ENCODE measurements at regions of chr2 and their contacts with region 1.

Region 1: DNA sequence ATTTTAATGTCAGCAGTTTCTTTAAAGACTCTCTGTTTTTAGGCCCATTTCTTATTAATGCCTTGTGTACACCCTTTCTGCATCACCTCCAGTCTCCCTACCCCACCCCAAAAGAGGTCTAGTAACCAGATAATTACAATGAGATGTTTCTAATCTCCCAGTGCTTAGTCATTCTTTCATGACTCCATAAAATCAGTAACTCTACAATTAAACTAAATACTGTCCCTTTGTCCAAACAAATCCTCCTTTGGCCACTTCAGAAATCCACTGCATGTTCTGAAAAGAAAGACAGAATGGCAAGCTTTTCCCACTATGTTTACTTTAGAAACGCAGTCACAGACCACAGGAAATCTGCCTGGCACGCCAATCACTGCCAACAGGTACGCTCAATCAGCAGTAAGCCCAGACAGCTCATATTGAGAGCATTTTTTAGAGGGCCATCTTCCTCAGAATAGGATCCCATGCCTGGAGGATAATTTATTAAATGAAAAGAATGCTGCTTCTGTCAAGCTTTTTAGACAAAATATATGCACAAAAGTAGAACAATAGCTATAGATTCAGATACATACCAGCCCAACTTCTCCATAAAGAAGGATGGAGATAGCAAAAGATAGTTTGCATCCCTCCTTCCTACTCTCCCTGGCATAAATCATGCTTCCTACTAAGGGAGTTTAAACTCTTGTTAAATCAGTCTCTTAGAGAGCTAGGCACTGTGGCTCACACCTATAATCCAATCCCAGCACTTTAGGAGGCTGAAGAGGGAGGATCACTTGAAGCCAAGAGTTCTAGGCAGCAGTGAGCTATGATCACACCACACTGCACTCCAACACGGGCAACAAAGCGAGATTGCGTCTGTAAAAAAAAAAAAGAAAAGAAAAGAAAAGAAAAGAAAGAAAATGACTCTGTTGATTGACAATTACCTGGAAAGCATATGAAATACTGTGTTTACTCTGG is 14.6 kb downstream of the CLASP1 start:
- DNase-seq: peak; percentile 43 to 71
- H3K4me3 ChIP-seq: no peak overlapping the region
- H3K27ac ChIP-seq: peak overlapping the region; percentile 66
- H3K4me1 ChIP-seq: peaks cover 19% of the 10 kb centered on the region
- H3K27me3 ChIP-seq: no peaks in the 10 kb centered on the region
- CTCF ChIP-seq: no peak

Region 2: GRCh38 chr2:121561617-121562268 is 72.9 kb before region 1 on chr2:
- CTCF ChIA-PET with region 1: no interaction called
- POLR2A ChIA-PET with region 1: interaction called, 19 read pairs
- intact Hi-C with region 1: no loop called
- DNase-seq: no peak
- H3K4me3 ChIP-seq: no peak overlapping the region
- H3K27ac ChIP-seq: no peak overlapping the region
- H3K4me1 ChIP-seq: no peaks in the 10 kb centered on the region
- H3K27me3 ChIP-seq: no peaks in the 10 kb centered on the region
- CTCF ChIP-seq: no peak

Region 3: DNA sequence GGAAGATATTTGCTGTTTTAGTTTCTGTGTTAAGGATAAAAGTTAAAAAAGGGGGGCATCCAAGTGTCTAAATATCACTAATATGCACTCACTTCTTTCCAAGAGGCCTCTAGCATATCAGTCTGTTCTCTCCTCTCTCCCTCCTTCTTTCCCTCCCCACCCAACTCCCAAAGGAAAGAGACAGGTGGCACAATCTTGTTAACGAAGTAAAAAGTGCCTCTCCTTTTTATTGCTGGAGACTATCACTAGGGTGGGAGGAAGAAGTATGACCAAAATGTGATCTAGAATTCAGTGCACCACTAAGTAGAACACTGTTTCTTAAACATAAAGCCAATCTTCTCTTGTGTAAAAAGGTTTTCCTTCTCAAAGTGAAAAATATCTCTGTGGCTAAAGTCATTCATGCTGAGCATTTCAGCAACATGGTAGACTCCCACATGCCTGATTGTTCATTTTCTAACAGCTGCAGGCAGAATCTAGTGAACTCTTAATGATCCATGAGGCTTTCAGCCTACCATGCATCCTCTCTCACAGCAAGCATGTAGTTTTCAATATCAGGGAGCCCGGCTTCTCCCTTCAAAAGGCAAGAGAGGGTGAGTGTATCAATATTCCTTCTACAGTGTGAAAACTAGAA is 64.5 kb before region 1 on chr2:
- CTCF ChIA-PET with region 1: no interaction called
- POLR2A ChIA-PET with region 1: interaction called, 12 read pairs
- intact Hi-C with region 1: no loop called
- DNase-seq: no peak
- H3K4me3 ChIP-seq: no peak overlapping the region
- H3K27ac ChIP-seq: no peak overlapping the region
- H3K4me1 ChIP-seq: 0 out of 2 replicates have a peak, but pooled peaks cover 3% of the 10 kb centered on the region
- H3K27me3 ChIP-seq: no peaks in the 10 kb centered on the region
- CTCF ChIP-seq: no peak

Region 4: GRCh38 chr2:121583555-121583954 is 51.1 kb before region 1 on chr2:
- CTCF ChIA-PET with region 1: no interaction called
- POLR2A ChIA-PET with region 1: no interaction called
- intact Hi-C with region 1: no loop called
- DNase-seq: no peak
- H3K4me3 ChIP-seq: no peak overlapping the region
- H3K27ac ChIP-seq: no peak overlapping the region
- H3K4me1 ChIP-seq: no peaks in the 10 kb centered on the region
- H3K27me3 ChIP-seq: no peaks in the 10 kb centered on the region
- CTCF ChIP-seq: no peak

Region 5: DNA sequence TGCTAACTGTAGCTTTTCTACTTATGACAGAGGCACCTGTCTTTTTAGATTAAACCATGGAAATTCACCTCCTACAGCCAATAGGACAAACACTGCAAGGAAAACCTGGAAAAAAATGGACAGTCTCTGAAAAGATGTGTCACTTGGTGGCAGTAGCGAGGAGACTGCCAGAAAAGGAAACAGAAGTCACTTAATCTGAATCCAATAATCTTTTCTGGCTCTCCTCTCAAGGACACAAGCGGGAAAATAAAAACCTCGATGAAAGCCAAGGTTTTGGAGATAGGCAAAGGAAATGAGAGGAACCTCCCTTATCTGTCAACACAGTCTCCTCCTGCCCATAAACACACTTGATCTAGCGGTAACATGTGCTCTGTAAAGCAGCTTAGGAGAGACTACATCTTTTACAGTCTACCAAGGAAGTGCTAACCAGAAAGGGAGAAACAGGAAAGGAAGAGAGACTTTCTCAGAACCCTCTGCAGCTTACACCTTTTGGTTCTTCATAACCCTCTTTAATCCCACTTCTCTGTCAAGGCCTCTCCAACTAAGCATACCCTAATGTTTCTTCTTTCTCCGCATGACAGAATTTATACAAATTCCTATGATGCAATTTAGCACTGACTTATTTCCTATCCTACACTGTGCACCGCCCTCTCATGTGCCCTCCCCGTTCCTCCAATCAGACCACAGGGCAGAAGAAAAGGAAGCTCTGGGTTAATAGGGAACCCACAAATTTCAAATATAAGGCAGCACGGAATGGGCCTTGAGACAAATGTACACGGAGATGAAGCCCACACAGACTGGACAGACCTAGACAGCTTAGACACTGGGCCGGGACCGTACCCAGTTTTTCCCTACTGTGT is 38.2 kb before region 1 on chr2:
- CTCF ChIA-PET with region 1: no interaction called
- POLR2A ChIA-PET with region 1: no interaction called
- intact Hi-C with region 1: loop called (anchors 2 kb)
- DNase-seq: peak; percentile 35 to 49
- H3K4me3 ChIP-seq: no peak overlapping the region
- H3K27ac ChIP-seq: 0 out of 2 replicates have a peak overlapping the region, but pooled peaks have one; percentile 13
- H3K4me1 ChIP-seq: 0 out of 2 replicates have a peak, but pooled peaks cover 3% of the 10 kb centered on the region
- H3K27me3 ChIP-seq: no peaks in the 10 kb centered on the region
- CTCF ChIP-seq: peak; percentile 71

Measured in PC-9 (cell line).